ENCODE measurements at regions of chr11 and their contacts with region 1.

Region 1: DNA sequence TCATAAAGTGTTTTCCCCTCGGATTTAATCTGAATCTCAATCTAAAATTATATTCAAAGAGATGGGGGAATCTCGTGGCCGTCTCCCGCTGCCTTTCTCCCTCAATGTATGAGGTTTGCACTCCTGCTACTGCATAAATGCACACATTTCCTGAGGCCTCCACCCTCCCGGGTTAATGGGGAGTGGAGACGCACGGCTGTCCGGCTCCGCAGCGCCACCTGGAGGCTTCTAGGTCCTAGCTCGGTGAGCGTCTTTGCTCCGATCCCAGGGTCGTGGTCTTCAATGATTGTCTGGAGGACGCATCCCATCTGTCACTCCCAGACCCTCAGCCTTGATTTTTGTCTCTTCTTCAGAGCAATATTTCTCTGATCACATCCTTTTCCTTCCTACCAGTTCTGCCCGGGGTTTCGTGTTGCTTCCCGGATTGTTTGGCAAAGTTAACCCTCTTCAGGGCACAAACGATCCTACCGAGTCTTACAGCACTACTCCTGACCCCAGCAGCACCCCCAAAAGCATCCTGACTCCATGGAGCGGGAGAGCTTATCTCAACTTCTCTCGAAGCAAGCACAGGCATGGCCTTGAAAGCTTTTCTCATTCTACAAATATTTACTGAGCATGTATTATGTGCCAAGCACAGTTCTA is at the start of gene LMO1:
- DNase-seq: peak; percentile 58 to 62 (median 59)
- H3K4me3 ChIP-seq: no peak within 1 kb of the TSS
- H3K4me3 Mint-ChIP-seq: peak within 1 kb of the TSS; percentile 67 to 88 (median 76)
- H3K27ac ChIP-seq: no peak within 1 kb of the TSS
- H3K27ac Mint-ChIP-seq: peak within 1 kb of the TSS in 2 of 7 donors; percentile 43 to 49
- H3K4me1 ChIP-seq: peaks cover 13% of the 10 kb centered on the region
- H3K4me1 Mint-ChIP-seq: peaks cover 11 to 17% (median 12%) of the 10 kb centered on the region in 4 donors
- H3K27me3 ChIP-seq: peaks cover 26% of the 10 kb centered on the region
- H3K27me3 Mint-ChIP-seq: peaks cover 22 to 57% of the 10 kb centered on the region in 2 donors
- total RNA-seq, gene LMO1: not detected

Region 2: DNA sequence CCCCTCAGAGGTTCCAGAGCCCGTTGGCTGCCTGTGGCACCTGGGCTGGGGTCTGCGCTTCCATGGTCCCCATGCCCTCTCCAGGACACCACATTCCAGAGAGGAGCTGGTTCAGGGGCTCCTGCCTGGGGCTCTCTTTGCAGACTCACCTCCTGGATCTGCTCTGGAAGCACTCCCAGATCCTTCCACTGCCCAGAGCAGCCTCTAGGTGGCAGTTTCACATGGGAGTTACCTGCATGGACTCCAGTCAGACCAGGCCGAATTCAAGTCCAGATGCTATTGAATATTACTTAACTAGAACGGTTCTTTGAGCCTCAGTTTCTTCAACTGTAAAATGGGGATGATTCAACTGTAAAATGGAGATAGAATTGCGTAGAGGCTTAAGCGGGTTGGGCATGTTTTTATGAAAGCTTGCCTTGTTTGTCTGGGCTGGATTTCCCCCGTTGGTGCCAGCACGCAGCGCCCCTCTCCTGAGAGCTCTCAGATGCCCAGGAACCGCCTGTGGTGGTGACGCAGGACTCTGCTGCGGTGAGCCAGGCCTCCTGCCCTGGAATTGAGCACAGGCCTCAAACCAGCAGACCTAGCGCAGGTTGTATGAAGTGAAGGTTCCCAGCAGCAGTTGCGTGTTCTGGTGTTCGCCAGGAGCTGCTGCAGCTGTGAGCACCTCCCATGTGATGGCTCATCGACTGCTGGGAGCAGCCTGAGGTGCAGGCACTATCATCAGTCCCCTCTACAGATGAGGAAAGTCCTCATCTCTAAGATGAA is 44.5 kb before region 1 on chr11:
- CTCF ChIA-PET with region 1: interaction called, 11 read pairs
- POLR2A ChIA-PET with region 1: no interaction called
- intact Hi-C with region 1: no loop called
- DNase-seq: peak in 1 of 5 donors; percentile 2
- H3K4me3 ChIP-seq: no peak overlapping the region
- H3K4me3 Mint-ChIP-seq: no peak overlapping the region
- H3K27ac ChIP-seq: no peak overlapping the region
- H3K27ac Mint-ChIP-seq: no peak overlapping the region
- H3K4me1 ChIP-seq: no peaks in the 10 kb centered on the region
- H3K4me1 Mint-ChIP-seq: no peaks in the 10 kb centered on the region
- H3K27me3 ChIP-seq: no peaks in the 10 kb centered on the region
- H3K27me3 Mint-ChIP-seq: peaks cover 3 to 6% of the 10 kb centered on the region in 2 donors

Region 3: GRCh38 chr11:8225589-8226036 is 38.3 kb before region 1 on chr11:
- CTCF ChIA-PET with region 1: interaction called, 22 read pairs
- POLR2A ChIA-PET with region 1: no interaction called
- intact Hi-C with region 1: loop called (anchors 1 kb)
- DNase-seq: peak in 4 of 5 donors; percentile 35 to 52 (median 36)
- H3K4me3 ChIP-seq: no peak overlapping the region
- H3K4me3 Mint-ChIP-seq: no peak overlapping the region
- H3K27ac ChIP-seq: no peak overlapping the region
- H3K27ac Mint-ChIP-seq: no peak overlapping the region
- H3K4me1 ChIP-seq: no peaks in the 10 kb centered on the region
- H3K4me1 Mint-ChIP-seq: peaks cover 0 to 2% (median under 1%) of the 10 kb centered on the region in 4 donors
- H3K27me3 ChIP-seq: no peaks in the 10 kb centered on the region
- H3K27me3 Mint-ChIP-seq: peaks cover 0 to 4% of the 10 kb centered on the region in 2 donors

Region 4: GRCh38 chr11:8247312-8247711 is 16.6 kb before region 1 on chr11:
- CTCF ChIA-PET with region 1: interaction called, 25 read pairs
- POLR2A ChIA-PET with region 1: no interaction called
- intact Hi-C with region 1: no loop called
- DNase-seq: no peak
- H3K4me3 ChIP-seq: no peak overlapping the region
- H3K4me3 Mint-ChIP-seq: no peak overlapping the region
- H3K27ac ChIP-seq: no peak overlapping the region
- H3K27ac Mint-ChIP-seq: no peak overlapping the region
- H3K4me1 ChIP-seq: no peaks in the 10 kb centered on the region
- H3K4me1 Mint-ChIP-seq: no peaks in the 10 kb centered on the region
- H3K27me3 ChIP-seq: no peaks in the 10 kb centered on the region
- H3K27me3 Mint-ChIP-seq: peaks cover 0 to 5% of the 10 kb centered on the region in 2 donors

Region 5: DNA sequence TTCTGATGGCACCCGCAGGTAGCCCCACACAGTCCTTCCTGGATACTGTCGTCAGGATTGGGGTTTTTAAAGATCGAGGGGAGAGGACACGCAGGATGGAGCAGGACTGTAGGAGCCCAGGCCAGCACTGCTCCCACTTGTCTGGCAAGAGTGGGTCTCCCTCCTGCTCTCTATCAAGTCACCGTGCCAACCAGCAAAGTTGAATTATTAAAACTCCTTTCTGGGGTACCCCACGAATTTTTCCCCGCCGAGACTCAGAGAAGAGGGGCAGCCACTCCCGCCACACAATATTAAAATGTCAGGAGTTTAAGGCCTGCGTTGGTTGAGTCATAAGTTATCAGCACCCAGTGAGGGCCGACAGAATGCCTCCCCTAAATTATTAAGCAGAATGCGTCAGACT is 10.3 kb before region 1 on chr11:
- CTCF ChIA-PET with region 1: interaction called, 25 read pairs
- POLR2A ChIA-PET with region 1: no interaction called
- intact Hi-C with region 1: no loop called
- DNase-seq: no peak
- H3K4me3 ChIP-seq: no peak overlapping the region
- H3K4me3 Mint-ChIP-seq: no peak overlapping the region
- H3K27ac ChIP-seq: no peak overlapping the region
- H3K27ac Mint-ChIP-seq: no peak overlapping the region
- H3K4me1 ChIP-seq: no peaks in the 10 kb centered on the region
- H3K4me1 Mint-ChIP-seq: no peaks in the 10 kb centered on the region
- H3K27me3 ChIP-seq: no peaks in the 10 kb centered on the region
- H3K27me3 Mint-ChIP-seq: peaks cover 2 to 5% of the 10 kb centered on the region in 2 donors

Measured in CD4-positive, alpha-beta memory T cell (primary cell).